Heart right ventricle (tissue), 16 donors: ENCODE measurements at regions of chr9 and their contacts with region 1.

Region 1: GRCh38 chr9:75739884-75740611 is 150.4 kb upstream of the PCSK5 start:
- DNase-seq: no peak
- ATAC-seq: peak in 2 of 8 donors; percentile 33 to 76
- H3K4me3 ChIP-seq: no peak overlapping the region
- H3K27ac ChIP-seq: peak overlapping the region in 2 of 10 donors; percentile 1
- H3K4me1 ChIP-seq: peaks cover 0 to 18% (median 3%) of the 10 kb centered on the region in 9 donors
- H3K27me3 ChIP-seq: no peaks in the 10 kb centered on the region
- CTCF ChIP-seq: no peak

Region 2: DNA sequence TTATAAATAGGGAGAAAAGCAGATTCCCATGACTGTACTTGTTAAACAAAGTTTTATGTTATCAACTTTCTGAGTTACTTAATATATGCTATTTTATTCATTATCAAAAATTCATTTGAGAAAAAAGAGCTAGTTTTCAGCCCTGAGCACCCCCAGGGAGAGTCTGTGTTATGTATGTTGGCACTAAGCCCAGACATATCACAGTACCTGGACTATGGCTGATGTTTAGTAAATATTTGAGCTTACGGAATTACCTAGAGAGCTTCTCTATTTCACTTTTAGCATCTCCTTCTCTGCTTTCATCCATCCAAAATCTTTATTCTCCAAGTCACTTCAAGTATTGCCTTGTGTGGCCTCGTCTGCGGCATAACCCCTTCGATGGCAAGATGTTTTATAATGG is 75.5 kb before region 1 on chr9:
- intact Hi-C with region 1: loop called in 1 of 10 experiments (anchors 10 kb)
- DNase-seq: no peak
- ATAC-seq: no peak
- H3K4me3 ChIP-seq: no peak overlapping the region
- H3K27ac ChIP-seq: no peak overlapping the region
- H3K4me1 ChIP-seq: peaks cover 0 to 8% (median 0%) of the 10 kb centered on the region in 9 donors
- H3K27me3 ChIP-seq: no peaks in the 10 kb centered on the region
- CTCF ChIP-seq: no peak